ENCODE measurements at regions of chr2 and their contacts with region 1.

Region 1: DNA sequence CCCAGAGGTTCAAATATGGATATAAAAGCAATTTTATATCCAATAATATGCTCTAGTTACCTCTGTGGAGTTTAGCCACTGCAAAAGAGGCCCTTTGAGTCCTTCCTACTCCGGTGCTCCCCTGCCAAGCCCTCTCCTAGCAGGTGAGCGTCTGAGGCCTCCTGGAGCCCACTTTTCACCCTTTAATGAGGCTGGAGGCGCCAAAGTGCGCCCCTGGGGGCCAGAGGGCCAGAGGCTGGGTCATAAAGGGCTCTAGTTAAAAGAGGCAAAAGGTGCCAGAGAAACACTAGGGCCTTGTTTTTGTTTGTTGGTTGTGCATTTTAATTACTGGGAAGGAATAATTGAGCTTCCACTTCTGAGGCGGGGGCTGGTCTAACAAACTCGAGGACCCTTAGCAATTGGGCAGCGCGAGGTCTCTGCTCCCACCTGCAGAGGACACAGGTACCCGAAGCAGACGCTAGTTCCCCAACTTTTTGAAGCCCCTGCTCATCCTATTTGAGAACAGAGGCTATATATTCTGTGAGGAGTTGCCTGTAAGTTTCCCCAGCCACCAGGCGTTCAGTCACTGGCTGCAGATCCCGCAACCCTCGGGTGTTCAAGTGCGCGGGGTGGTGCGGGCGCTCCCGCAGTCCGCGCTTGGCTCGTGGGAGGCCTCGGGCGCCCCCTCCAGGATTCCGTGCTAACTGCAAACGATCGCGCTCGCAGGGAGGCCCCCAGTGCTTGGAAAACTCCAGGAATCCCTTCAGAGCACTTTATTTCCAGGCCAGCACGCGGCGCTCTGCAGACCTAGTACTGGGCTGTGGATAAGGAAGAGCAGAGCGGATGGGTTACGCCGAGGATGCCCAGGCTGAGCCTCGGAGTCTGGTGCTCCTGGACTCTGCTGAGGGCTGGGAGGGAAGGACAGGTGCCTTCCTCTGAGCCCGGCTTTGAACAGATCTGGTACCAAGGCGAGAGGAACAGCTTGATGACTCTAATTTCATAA is 14.1 kb downstream of the MSGN1 start:
- DNase-seq: peak; percentile 65
- ATAC-seq: peak; percentile 96
- H3K4me3 ChIP-seq: peak overlapping the region; percentile 14; the same call in 1 of the 2 replicates
- H3K27ac ChIP-seq: no peak overlapping the region
- H3K4me1 ChIP-seq: no peaks in the 10 kb centered on the region
- H3K27me3 ChIP-seq: peaks cover 32% of the 10 kb centered on the region
- CTCF ChIP-seq: peak; percentile 85
- POLR2A ChIP-seq: no peak
- RAD21 ChIP-seq: peak; percentile 60

Region 2: GRCh38 chr2:17470855-17471641 is 359.3 kb before region 1 on chr2:
- CTCF ChIA-PET with region 1: no interaction called
- POLR2A ChIA-PET with region 1: no interaction called
- dilution Hi-C with region 1: no loop called
- in situ Hi-C with region 1: no loop called
- intact Hi-C with region 1: loop called (anchors 10 kb)
- DNase-seq: peak; percentile 40
- ATAC-seq: peak; percentile 48
- H3K4me3 ChIP-seq: no peak overlapping the region
- H3K27ac ChIP-seq: no peak overlapping the region
- H3K4me1 ChIP-seq: no peaks in the 10 kb centered on the region
- H3K27me3 ChIP-seq: no peaks in the 10 kb centered on the region
- CTCF ChIP-seq: peak; percentile 45
- POLR2A ChIP-seq: no peak
- RAD21 ChIP-seq: peak; percentile 60